ENCODE measurements at regions of chr2 and their contacts with region 1.

Region 1: GRCh38 chr2:36461039-36461681 is 105.6 kb downstream of the CRIM1 start:
- DNase-seq: no peak
- ATAC-seq: peak; percentile 53
- H3K4me3 Mint-ChIP-seq: no peak overlapping the region
- H3K27ac Mint-ChIP-seq: no peak overlapping the region
- H3K4me1 Mint-ChIP-seq: no peaks in the 10 kb centered on the region; the same call in none of the 2 replicates
- H3K27me3 Mint-ChIP-seq: no peaks in the 10 kb centered on the region
- CTCF ChIP-seq: no peak

Region 2: GRCh38 chr2:36355151-36355889 is 105.8 kb before region 1 on chr2 and contains the start of gene CRIM1:
- CTCF ChIA-PET with region 1: interaction called, 86 read pairs
- POLR2A ChIA-PET with region 1: interaction called, 17 read pairs
- DNase-seq: peak; percentile 82
- ATAC-seq: peak; percentile 58
- H3K4me3 Mint-ChIP-seq: peak within 1 kb of the TSS; percentile 98
- H3K27ac Mint-ChIP-seq: peak within 1 kb of the TSS; percentile 39
- H3K4me1 Mint-ChIP-seq: peaks cover 56% of the 10 kb centered on the region
- H3K27me3 Mint-ChIP-seq: peaks cover 19% of the 10 kb centered on the region
- CTCF ChIP-seq: no peak
- total RNA-seq, gene CRIM1: 24.1 to 25.1 TPM (median 24.3 TPM) in 3 replicates

Region 3: GRCh38 chr2:36367895-36368353 is 93.2 kb before region 1 on chr2:
- CTCF ChIA-PET with region 1: interaction called, 23 read pairs
- POLR2A ChIA-PET with region 1: interaction called, 3 read pairs
- DNase-seq: no peak
- ATAC-seq: peak; percentile 66
- H3K4me3 Mint-ChIP-seq: peak overlapping the region; percentile 13
- H3K27ac Mint-ChIP-seq: peak overlapping the region; percentile 92
- H3K4me1 Mint-ChIP-seq: peaks cover 97% of the 10 kb centered on the region
- H3K27me3 Mint-ChIP-seq: no peaks in the 10 kb centered on the region
- CTCF ChIP-seq: no peak

Region 4: DNA sequence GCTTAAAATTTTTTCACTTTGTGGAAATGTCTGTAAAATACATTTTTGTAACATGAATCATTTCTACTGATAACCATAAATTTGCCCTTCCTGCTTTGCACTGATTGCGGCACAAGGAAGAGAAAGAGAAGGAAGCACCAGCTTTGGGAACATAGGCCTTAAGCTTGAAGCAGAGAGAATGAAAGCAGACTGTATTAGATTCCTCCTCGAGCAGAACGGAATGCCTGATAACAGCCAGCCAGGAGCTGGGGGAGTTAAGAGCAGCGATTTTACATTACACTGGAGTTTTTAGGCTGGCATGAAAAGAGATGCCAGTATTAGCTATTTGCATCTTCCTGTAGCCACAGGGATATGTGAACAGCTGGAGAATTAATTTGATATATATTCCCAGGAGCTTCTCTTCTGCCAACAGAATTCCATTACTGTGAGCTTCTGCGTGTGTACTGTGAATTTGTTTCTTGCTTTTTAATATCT is 72.0 kb before region 1 on chr2:
- CTCF ChIA-PET with region 1: interaction called, 10 read pairs
- POLR2A ChIA-PET with region 1: no interaction called
- DNase-seq: no peak
- ATAC-seq: peak; percentile 51
- H3K4me3 Mint-ChIP-seq: no peak overlapping the region
- H3K27ac Mint-ChIP-seq: peak overlapping the region; percentile 64
- H3K4me1 Mint-ChIP-seq: peaks cover 73% of the 10 kb centered on the region
- H3K27me3 Mint-ChIP-seq: no peaks in the 10 kb centered on the region
- CTCF ChIP-seq: no peak

Region 5: GRCh38 chr2:36423172-36423571 is 38.0 kb before region 1 on chr2:
- CTCF ChIA-PET with region 1: interaction called, 18 read pairs
- POLR2A ChIA-PET with region 1: no interaction called
- DNase-seq: no peak
- ATAC-seq: no peak
- H3K4me3 Mint-ChIP-seq: no peak overlapping the region
- H3K27ac Mint-ChIP-seq: no peak overlapping the region
- H3K4me1 Mint-ChIP-seq: peaks cover 71% of the 10 kb centered on the region
- H3K27me3 Mint-ChIP-seq: no peaks in the 10 kb centered on the region
- CTCF ChIP-seq: no peak

Region 6: GRCh38 chr2:36450466-36451196 is 10.5 kb before region 1 on chr2:
- CTCF ChIA-PET with region 1: interaction called, 18 read pairs
- POLR2A ChIA-PET with region 1: interaction called, 4 read pairs
- DNase-seq: no peak
- ATAC-seq: no peak
- H3K4me3 Mint-ChIP-seq: no peak overlapping the region
- H3K27ac Mint-ChIP-seq: peak overlapping the region; percentile 59; the same call in 1 of the 2 replicates
- H3K4me1 Mint-ChIP-seq: peaks cover 4% of the 10 kb centered on the region
- H3K27me3 Mint-ChIP-seq: no peaks in the 10 kb centered on the region
- CTCF ChIP-seq: no peak

Measured in WTC11 (cell line).